ENCODE measurements at regions of chr16 and their contacts with region 1.

Region 1: DNA sequence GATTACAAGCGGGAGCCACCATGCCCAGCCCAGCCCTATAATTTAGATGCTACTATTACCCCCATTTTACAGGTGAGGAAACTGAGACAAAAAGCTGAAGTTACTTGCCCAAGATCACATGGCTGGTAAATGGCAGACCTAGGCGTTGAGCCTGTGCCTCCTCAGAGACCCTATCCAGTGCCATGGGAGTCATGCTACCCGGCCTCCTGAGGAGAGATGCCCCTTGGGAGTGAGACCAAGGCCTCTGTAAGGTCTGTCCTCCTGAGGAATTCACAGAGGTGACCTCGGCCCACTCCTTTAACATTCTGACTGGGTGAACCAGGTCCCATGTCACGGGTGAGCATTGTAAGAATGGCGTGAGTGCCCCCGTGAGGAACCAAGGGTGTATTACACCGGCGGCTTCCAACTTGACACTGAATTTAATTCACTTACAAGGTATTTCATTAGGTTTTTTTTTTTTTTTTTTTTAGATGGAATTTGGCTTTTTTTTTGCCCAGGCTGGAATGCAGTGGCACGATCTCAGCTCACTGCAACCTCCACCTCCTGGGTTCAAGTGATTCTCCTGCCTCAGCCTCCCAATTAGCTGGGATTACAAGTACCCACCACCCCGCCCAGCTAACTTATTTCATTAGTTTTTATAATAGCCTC is 95.7 kb downstream of the ABCC6 start:
- DNase-seq: peak; percentile 39 to 88
- H3K4me3 ChIP-seq: no peak overlapping the region
- H3K27ac ChIP-seq: no peak overlapping the region
- H3K4me1 ChIP-seq: no peaks in the 10 kb centered on the region
- H3K27me3 ChIP-seq: no peaks in the 10 kb centered on the region
- CTCF ChIP-seq: peak; percentile 66 to 72 (median 69)
- EP300 ChIP-seq: no peak
- POLR2A ChIP-seq: no peak
- RAD21 ChIP-seq: peak; percentile 87 to 89

Region 2: GRCh38 chr16:16092925-16093627 is 34.5 kb before region 1 on chr16:
- CTCF ChIA-PET with region 1: interaction called, 13 read pairs
- POLR2A ChIA-PET with region 1: no interaction called
- DNase-seq: no peak
- H3K4me3 ChIP-seq: peak overlapping the region in 1 of 4 experiments; percentile 1; a peak in 2 of 8 replicates
- H3K27ac ChIP-seq: no peak overlapping the region
- H3K4me1 ChIP-seq: peaks cover 0 to 10% (median 3%) of the 10 kb centered on the region in 4 experiments; a peak in 1 of 7 replicates
- H3K27me3 ChIP-seq: no peaks in the 10 kb centered on the region
- CTCF ChIP-seq: no peak
- EP300 ChIP-seq: no peak
- POLR2A ChIP-seq: no peak
- RAD21 ChIP-seq: no peak